CD14-positive monocyte (primary cell): ENCODE measurements at regions of chr10 and their contacts with region 1.

Region 1: DNA sequence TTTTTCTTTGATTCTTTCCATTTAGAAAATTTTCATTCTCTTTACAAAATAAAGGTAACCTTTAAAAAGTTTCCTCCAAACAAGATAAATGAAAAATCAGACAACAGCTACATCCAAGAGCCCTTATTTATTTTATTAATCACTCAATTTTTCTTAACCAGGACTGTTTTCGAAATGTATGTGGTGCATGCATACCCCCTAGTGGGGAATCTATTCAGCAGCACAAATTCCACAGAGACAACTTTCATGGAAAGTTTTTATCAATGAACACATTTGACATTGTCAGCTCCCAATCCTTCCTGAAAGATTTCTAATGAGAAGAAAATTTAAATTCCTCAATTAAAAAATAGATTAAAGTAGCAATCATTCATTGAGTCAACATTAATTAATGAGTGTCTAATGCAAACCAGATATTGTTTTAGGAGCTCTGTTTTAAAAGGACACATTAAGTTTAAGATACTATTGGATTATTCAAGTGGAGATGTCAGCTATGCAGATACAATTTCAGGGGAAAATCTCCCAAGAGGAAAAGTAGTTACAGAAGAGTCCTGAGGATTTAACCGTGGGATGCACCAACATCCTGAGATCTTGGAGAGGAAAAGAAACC is 5.2 kb upstream of the HTR7 start:
- DNase-seq: peak in 2 of 3 donors; percentile 37 to 38
- H3K4me3 ChIP-seq: no peak overlapping the region
- H3K4me3 Mint-ChIP-seq: no peak overlapping the region
- H3K27ac ChIP-seq: no peak overlapping the region
- H3K27ac Mint-ChIP-seq: no peak overlapping the region
- H3K4me1 ChIP-seq: peaks cover 11 to 20% of the 10 kb centered on the region in 2 donors
- H3K4me1 Mint-ChIP-seq: peaks cover 19% of the 10 kb centered on the region
- H3K27me3 ChIP-seq: peaks cover 0 to 9% of the 10 kb centered on the region in 2 donors
- H3K27me3 Mint-ChIP-seq: peaks cover 12 to 19% (median 18%) of the 10 kb centered on the region in 3 donors
- CTCF ChIP-seq: peak; percentile 81

Region 2: DNA sequence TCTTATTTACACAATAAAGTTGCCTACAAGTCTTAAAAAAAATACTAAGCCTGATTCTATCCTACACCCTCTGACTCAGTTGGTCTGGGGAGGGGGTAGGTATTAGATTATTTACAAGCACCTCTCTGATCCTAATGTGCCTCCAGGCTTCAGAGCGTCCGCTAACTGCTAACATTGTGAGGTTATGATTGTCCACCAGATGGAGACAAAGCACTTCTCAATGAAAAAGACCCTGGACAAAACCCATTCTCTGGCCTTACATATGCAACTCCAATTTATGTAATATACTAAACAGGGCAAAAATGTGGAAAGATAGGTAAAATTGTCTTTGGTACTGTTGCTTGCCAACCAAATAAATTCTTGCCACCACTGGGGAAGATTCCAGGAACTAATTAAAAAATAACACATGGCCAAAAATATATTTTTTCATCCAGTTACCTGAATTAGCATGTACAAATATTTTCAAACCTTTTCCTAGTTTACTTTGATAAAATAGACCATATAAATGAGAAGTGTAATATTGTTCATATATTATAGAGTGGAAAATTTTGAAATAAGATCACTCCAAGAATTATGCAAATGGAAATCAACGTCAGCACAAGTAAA is 1069.3 kb before region 1 on chr10:
- intact Hi-C with region 1: loop called (anchors 5 to 10 kb)
- DNase-seq: peak; percentile 26 to 54 (median 50)
- H3K4me3 ChIP-seq: no peak overlapping the region
- H3K4me3 Mint-ChIP-seq: no peak overlapping the region
- H3K27ac ChIP-seq: no peak overlapping the region
- H3K27ac Mint-ChIP-seq: no peak overlapping the region
- H3K4me1 ChIP-seq: no peaks in the 10 kb centered on the region
- H3K4me1 Mint-ChIP-seq: no peaks in the 10 kb centered on the region
- H3K27me3 ChIP-seq: no peaks in the 10 kb centered on the region
- H3K27me3 Mint-ChIP-seq: peaks cover 1 to 5% (median 5%) of the 10 kb centered on the region in 3 donors
- CTCF ChIP-seq: peak; percentile 87

Region 3: DNA sequence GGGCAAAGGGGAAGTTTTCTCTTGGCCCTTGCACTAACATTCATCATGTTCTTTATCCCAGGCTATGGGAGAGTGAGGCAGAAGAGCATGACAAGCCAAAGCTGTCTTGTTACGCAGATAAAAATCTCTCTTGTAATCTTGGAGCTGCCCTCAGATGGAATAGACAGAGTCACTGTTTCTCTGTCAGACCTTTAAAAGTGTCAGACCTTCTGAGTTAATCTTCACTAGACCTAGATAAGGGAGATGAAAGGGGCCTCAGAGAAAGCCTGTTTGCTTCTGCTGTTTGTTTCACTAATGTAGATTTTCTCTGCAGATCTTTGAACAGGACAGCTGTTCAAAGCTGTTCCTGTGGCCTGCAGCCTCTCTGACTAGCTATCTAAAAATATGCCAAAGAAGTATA is 1048.7 kb before region 1 on chr10:
- intact Hi-C with region 1: no loop called
- DNase-seq: no peak
- H3K4me3 ChIP-seq: no peak overlapping the region
- H3K4me3 Mint-ChIP-seq: no peak overlapping the region
- H3K27ac ChIP-seq: no peak overlapping the region
- H3K27ac Mint-ChIP-seq: no peak overlapping the region
- H3K4me1 ChIP-seq: no peaks in the 10 kb centered on the region
- H3K4me1 Mint-ChIP-seq: peaks cover 3% of the 10 kb centered on the region
- H3K27me3 ChIP-seq: no peaks in the 10 kb centered on the region
- H3K27me3 Mint-ChIP-seq: peaks cover 3 to 10% (median 9%) of the 10 kb centered on the region in 3 donors
- CTCF ChIP-seq: no peak

Region 4: DNA sequence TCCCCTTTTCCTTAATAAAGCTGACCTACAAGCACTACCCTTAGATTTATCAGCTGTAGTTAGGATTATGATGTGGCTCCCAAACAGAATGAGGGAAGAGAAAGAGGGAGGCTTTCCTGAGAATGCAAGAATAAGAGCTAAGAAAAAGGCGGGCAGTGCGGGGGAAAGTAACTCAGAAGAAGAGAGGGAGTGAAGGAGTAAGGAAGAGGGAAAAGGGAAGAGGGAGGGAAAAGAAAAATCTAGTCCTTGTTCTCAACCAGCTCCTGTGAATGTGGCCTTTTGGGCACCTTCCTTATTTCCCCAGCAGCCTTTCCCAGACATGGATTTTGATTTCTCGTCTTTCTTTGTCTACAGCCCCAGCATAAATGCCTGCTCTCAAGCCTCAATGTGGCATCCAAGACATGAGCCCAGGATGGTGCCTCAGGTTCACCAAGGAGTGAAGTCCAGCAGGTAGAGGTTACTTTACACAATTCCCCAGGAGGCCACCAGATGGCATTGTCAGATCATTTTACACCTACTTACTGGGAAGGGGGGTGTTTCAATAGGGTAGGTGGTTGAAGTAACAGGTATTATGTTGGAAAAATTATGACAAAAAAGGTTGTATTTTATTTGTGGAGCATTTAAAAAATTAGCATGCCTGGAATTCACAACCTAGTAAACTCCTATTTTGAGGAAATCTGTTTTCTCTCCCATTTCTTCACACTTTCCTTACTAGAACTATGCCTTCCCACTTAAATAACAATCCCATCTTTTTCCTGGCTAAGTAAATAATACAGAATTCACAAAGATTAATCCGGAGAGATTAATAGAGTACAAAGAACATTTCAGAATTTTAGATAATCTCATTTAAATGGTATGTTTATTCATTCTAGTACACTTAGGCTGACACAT is 111.7 kb before region 1 on chr10:
- intact Hi-C with region 1: loop called (anchors 2 to 5 kb)
- DNase-seq: peak; percentile 18 to 57 (median 54)
- H3K4me3 ChIP-seq: no peak overlapping the region
- H3K4me3 Mint-ChIP-seq: no peak overlapping the region
- H3K27ac ChIP-seq: no peak overlapping the region
- H3K27ac Mint-ChIP-seq: peak overlapping the region in 2 of 7 donors; percentile 20 to 22
- H3K4me1 ChIP-seq: no peaks in the 10 kb centered on the region
- H3K4me1 Mint-ChIP-seq: peaks cover 3% of the 10 kb centered on the region
- H3K27me3 ChIP-seq: peaks cover 0 to 2% of the 10 kb centered on the region in 2 donors
- H3K27me3 Mint-ChIP-seq: peaks cover 0 to 13% (median 0%) of the 10 kb centered on the region in 3 donors
- CTCF ChIP-seq: peak; percentile 90